ENCODE measurements at regions of chr11 and their contacts with region 1.

Region 1: DNA sequence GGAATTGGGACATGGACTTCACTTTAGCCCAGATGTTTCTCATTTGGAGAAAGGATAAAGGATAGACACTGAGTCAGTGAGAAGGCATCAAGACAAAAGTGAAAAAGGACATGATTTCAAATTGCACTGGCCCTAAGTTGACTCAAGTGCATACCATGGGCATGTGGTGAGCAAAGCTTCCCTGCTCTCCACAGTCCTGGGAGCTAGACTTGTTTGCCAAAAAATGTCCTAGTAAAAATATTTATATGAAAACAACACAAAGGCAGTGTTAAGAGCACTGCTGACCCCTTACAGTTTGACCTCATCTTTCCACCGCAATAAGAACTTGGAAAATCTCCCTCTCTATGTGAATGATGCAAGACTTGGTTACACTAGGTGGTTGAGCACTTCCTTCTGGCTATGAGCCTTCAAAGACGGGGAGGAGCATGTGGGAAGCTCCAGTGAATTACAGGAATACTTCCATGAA is 46.5 kb upstream of the FIBIN start:
- DNase-seq: no peak

Region 2: GRCh38 chr11:26841818-26842473 is 105.5 kb before region 1 on chr11:
- intact Hi-C with region 1: loop called (anchors 5 kb)
- DNase-seq: no peak

Region 3: GRCh38 chr11:26896719-26897118 is 50.7 kb before region 1 on chr11:
- intact Hi-C with region 1: loop called (anchors 10 kb)
- DNase-seq: no peak

Region 4: DNA sequence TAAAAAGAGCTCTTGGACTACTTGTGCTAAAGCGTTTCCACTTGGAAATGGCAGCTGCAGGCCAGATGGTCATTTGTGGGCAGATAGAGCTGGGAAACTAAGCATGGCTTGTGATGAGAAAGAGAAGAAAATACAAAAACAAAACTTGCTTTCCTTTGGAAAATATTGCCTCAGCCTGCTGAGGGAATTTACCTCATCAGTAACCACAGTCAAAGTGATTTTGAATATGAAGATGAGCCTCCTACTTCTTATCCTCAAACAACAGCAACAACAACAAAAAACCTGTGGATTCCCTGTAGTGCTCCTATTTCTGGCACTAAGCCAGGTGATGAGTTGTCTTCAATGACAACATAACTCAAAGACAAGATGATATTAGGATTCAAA is 16.2 kb before region 1 on chr11:
- intact Hi-C with region 1: loop called (anchors 2 kb)
- DNase-seq: no peak

Region 5: DNA sequence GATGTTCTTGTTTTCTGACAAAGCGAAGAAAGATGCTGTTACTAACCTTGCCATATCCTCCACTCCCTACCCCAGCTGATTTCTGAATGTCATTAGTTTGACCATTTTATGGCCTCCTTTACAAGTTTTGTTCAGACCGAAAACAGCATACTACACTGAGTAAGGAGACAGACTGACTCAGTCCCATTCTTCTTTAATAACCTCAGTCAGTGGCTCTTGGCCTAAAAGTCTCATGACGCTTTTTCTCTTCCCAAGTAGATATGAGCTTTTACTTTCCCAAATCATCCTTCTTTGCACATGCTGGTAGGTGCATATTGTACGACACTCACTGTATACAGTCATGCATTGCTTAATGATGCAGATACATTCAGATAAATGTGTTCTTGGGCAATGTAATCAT is 38.5 kb after region 1 on chr11:
- intact Hi-C with region 1: loop called (anchors 5 kb)
- DNase-seq: no peak

Measured in cardiac septum (tissue), 1 donor.